Common myeloid progenitor, CD34-positive (primary cell): ENCODE measurements at regions of chr6 and their contacts with region 1.

Region 1: GRCh38 chr6:136792410-136793262 is at the start of gene MAP3K5:
- DNase-seq: peak; percentile 93 to 98 (median 97)
- H3K4me3 ChIP-seq: peak within 1 kb of the TSS; percentile 73 to 96 (median 92)
- H3K27ac ChIP-seq: peak within 1 kb of the TSS; percentile 83 to 95
- H3K4me1 ChIP-seq: peaks cover 23 to 39% (median 31%) of the 10 kb centered on the region in 4 experiments
- H3K27me3 ChIP-seq: no peaks in the 10 kb centered on the region

Region 2: GRCh38 chr6:136607932-136608772 is 184.5 kb before region 1 on chr6:
- CTCF ChIA-PET with region 1: interaction called, 12 read pairs
- POLR2A ChIA-PET with region 1: no interaction called
- DNase-seq: peak; percentile 68 to 80 (median 71)
- H3K4me3 ChIP-seq: no peak overlapping the region
- H3K27ac ChIP-seq: no peak overlapping the region
- H3K4me1 ChIP-seq: peaks cover 3 to 16% (median 10%) of the 10 kb centered on the region in 4 experiments
- H3K27me3 ChIP-seq: no peaks in the 10 kb centered on the region

Region 3: GRCh38 chr6:136651982-136652381 is 140.7 kb before region 1 on chr6:
- CTCF ChIA-PET with region 1: interaction called, 211 read pairs
- POLR2A ChIA-PET with region 1: interaction called, 7 read pairs
- DNase-seq: no peak
- H3K4me3 ChIP-seq: no peak overlapping the region
- H3K27ac ChIP-seq: no peak overlapping the region
- H3K4me1 ChIP-seq: peaks cover 5 to 25% (median 10%) of the 10 kb centered on the region in 4 experiments
- H3K27me3 ChIP-seq: no peaks in the 10 kb centered on the region

Region 4: DNA sequence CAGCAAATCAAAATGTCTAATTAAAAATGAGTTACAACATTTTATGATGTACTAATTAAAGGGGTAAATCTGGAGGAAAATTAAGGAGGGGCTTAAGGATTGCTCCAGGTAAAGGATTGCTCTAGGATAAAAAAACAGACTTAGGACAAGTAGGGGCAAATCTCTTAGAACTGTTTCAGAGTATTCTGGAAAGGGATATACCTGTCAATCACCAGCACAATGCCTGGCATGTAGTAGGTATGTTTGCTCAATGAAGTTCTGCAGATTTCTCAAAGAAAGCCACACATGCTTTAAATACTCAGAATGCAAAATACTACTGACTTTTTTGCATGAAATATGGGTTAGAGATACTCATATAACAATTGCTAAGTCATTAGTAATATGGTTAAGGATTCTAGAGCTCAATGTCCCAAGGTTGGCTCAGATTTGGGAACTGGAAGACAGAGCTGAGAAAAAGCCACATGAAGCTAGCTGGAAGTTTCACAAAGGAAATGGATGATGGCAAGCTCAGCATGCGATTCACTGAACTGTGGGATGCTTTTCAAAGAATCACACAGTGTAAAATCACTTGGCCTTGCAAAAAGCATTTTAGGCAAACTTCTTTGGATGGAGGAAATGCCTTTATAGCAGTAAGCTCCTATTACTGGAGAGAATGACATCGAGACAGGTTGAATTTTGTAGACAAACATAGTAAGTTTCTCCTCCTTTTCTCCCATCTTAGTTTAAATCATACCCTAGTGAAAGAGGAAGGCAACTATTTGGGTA is 73.2 kb before region 1 on chr6:
- CTCF ChIA-PET with region 1: interaction called, 38 read pairs
- POLR2A ChIA-PET with region 1: interaction called, 3 read pairs
- DNase-seq: no peak
- H3K4me3 ChIP-seq: no peak overlapping the region
- H3K27ac ChIP-seq: peak overlapping the region in 1 of 2 experiments; percentile 2
- H3K4me1 ChIP-seq: peaks cover 5 to 47% (median 38%) of the 10 kb centered on the region in 4 experiments
- H3K27me3 ChIP-seq: no peaks in the 10 kb centered on the region

Region 5: DNA sequence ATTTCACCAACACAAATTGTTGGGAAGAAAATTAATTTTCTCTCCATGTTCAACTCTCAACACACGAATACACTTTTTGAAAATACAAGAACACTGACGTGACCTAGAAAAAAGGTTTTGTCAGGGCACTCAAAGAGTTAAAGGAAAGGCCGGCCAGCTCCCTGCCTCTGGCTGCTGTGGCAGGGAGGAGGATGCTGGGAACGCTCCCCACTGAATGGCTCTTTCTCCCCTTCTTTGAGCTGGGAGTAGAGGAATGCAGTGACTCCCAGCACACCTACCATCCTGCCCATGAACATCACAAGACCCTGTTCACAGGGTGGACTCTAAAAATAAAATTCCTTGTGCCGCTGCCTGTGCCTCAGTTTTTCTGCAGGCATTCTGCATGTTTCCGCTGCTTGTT is 47.3 kb before region 1 on chr6:
- CTCF ChIA-PET with region 1: interaction called, 85 read pairs
- POLR2A ChIA-PET with region 1: interaction called, 3 read pairs
- DNase-seq: no peak
- H3K4me3 ChIP-seq: no peak overlapping the region
- H3K27ac ChIP-seq: no peak overlapping the region
- H3K4me1 ChIP-seq: peaks cover 4 to 27% (median 11%) of the 10 kb centered on the region in 4 experiments
- H3K27me3 ChIP-seq: no peaks in the 10 kb centered on the region

Region 6: GRCh38 chr6:136774352-136775041 is 18.1 kb before region 1 on chr6:
- CTCF ChIA-PET with region 1: interaction called, 20 read pairs
- POLR2A ChIA-PET with region 1: interaction called, 3 read pairs
- DNase-seq: peak in 2 of 3 donors; percentile 47 to 53
- H3K4me3 ChIP-seq: peak overlapping the region in 1 of 7 experiments; percentile 2
- H3K27ac ChIP-seq: no peak overlapping the region
- H3K4me1 ChIP-seq: peaks cover 3 to 26% (median 13%) of the 10 kb centered on the region in 4 experiments
- H3K27me3 ChIP-seq: no peaks in the 10 kb centered on the region

Region 7: GRCh38 chr6:136930528-136930927 is 137.9 kb after region 1 on chr6:
- CTCF ChIA-PET with region 1: no interaction called
- POLR2A ChIA-PET with region 1: no interaction called
- DNase-seq: no peak
- H3K4me3 ChIP-seq: no peak overlapping the region
- H3K27ac ChIP-seq: no peak overlapping the region
- H3K4me1 ChIP-seq: no peaks in the 10 kb centered on the region
- H3K27me3 ChIP-seq: peaks cover 5 to 20% (median 12%) of the 10 kb centered on the region in 5 experiments